ENCODE measurements at regions of chr4 and their contacts with region 1.

Region 1: DNA sequence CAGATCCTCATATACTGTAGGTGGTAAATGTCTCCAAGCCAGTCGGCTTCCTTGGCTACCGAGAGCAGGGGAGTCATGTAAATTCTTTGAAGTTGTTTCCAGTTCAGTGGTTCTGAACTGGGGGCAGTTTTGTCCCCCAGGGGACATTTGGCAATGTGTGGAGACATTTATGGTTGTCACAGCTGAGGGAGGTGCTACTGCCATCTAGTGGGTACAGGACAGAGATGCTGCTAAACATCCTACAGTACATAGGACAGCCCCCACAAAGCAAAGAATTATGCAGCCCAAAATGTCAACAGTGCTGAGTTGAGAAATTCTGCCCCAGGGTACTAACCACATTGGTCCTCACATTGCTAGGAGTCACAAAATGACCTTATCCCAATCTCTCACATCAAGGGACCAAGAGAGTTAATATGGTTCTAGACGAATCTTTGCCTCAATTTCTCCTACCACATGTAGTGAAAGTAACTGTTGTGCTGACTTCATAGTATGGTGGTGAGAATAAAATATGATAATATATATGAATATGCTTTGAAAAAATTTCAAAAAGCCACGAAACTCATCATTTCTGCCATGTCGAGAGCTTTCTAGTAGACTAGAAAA is 104.4 kb upstream of the ARHGAP24 start:
- DNase-seq: peak; percentile 44
- H3K4me3 Mint-ChIP-seq: no peak overlapping the region
- H3K27ac Mint-ChIP-seq: no peak overlapping the region
- H3K4me1 Mint-ChIP-seq: no peaks in the 10 kb centered on the region
- H3K27me3 Mint-ChIP-seq: peaks cover 4% of the 10 kb centered on the region
- CTCF ChIP-seq: peak; percentile 64

Region 2: GRCh38 chr4:85084380-85085094 is 286.0 kb before region 1 on chr4:
- CTCF ChIA-PET with region 1: no interaction called
- intact Hi-C with region 1: loop called (anchors 2 kb)
- DNase-seq: peak; percentile 54
- H3K4me3 Mint-ChIP-seq: no peak overlapping the region
- H3K27ac Mint-ChIP-seq: no peak overlapping the region
- H3K4me1 Mint-ChIP-seq: no peaks in the 10 kb centered on the region
- H3K27me3 Mint-ChIP-seq: no peaks in the 10 kb centered on the region
- CTCF ChIP-seq: peak; percentile 46

Measured in Calu3 (cell line).